Right ventricle myocardium superior (tissue), 1 donor: ENCODE measurements at regions of chr20 and their contacts with region 1.

Region 1: GRCh38 chr20:37270576-37271420 is 9.2 kb upstream of the GHRH start:
- DNase-seq: no peak
- ATAC-seq: peak; percentile 50

Region 2: DNA sequence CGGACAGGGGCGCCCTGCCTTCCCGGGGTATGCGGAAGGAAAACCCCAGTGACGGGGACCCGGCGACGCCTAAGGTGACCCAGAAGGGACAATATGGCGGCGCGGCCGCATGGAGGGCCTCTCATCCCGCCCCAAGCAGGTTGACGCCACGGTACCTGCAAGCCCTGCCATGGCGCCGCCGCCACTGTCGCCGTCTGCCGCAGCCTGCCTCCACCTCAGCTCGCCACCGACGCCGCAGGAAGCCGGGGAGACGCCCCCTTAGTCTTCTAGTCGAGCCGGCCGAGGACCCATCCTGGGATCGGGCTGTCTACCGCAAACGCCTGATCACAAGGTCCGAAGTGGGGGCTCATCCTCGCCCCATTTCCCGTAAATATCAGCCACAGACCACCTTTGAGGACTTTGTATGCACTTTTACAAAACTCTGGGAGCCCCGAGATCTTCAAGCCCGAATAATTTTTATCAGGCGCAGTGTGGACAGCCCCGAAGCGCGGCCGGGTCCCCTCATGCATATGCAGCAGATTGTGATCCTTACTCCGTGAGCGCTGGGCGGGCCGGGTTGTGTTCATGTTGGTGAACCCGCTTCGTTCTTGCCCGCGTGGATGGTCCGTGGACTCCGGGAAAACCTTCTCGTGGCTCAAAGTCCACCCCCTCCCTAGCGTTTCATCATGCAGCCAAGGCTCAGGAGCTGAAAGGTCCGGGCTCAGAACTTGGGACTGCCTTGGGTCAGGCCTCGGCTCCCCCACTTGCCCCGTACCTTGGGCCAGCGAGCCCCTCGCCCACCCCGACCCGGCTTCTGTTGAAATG is 257.0 kb after region 1 on chr20 and contains the start of gene BLCAP:
- intact Hi-C with region 1: loop called (anchors 2 kb)
- DNase-seq: peak; percentile 96
- ATAC-seq: peak; percentile 94
- total RNA-seq, gene BLCAP: 90.2 TPM